PC-3 (cell line): ENCODE measurements at regions of chr4 and their contacts with region 1.

Region 1: GRCh38 chr4:103099691-103100392 is at the start of gene BDH2:
- DNase-seq: peak; percentile 89
- ATAC-seq: peak; percentile 93
- H3K4me3 ChIP-seq: peak within 1 kb of the TSS; percentile 68
- H3K27ac ChIP-seq: no peak within 1 kb of the TSS
- H3K4me1 ChIP-seq: peaks cover 9% of the 10 kb centered on the region; the same call in 1 of the 2 replicates
- H3K27me3 ChIP-seq: no peaks in the 10 kb centered on the region
- CTCF ChIP-seq: peak; percentile 74
- total RNA-seq, gene BDH2: 10.5 and 16.0 TPM in 2 replicates

Region 2: GRCh38 chr4:102815981-102816380 is 283.9 kb before region 1 on chr4:
- CTCF ChIA-PET with region 1: no interaction called
- POLR2A ChIA-PET with region 1: interaction called, 11 read pairs
- intact Hi-C with region 1: loop called (anchors 10 kb)
- DNase-seq: peak; percentile 79
- ATAC-seq: peak; percentile 76
- H3K4me3 ChIP-seq: no peak overlapping the region
- H3K27ac ChIP-seq: peak overlapping the region; percentile 49
- H3K4me1 ChIP-seq: peaks cover 25% of the 10 kb centered on the region
- H3K27me3 ChIP-seq: no peaks in the 10 kb centered on the region
- CTCF ChIP-seq: no peak

Region 3: DNA sequence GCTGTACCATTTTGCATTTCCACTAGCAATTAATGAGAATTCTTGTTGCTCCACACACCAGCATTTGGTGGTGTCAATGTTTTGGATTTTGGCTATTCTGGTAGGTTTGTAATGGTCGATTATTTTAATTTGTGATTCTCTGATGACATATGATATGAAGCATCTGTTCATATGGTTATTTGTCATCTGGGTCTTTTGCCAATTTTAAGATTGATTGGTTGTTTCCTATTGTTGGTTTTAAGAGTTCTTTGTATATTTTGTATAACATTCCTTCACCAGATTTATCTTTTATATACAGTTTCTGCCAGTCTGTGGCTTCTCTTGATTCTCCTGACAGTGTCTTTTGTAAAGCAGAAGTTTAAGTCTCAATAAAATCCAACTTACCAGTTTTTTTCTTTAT is 18.3 kb after region 1 on chr4:
- CTCF ChIA-PET with region 1: no interaction called
- POLR2A ChIA-PET with region 1: no interaction called
- intact Hi-C with region 1: no loop called
- DNase-seq: no peak
- ATAC-seq: no peak
- H3K4me3 ChIP-seq: no peak overlapping the region
- H3K27ac ChIP-seq: no peak overlapping the region
- H3K4me1 ChIP-seq: no peaks in the 10 kb centered on the region
- H3K27me3 ChIP-seq: no peaks in the 10 kb centered on the region
- CTCF ChIP-seq: no peak